IMR-90 (cell line): ENCODE measurements at regions of chr2 and their contacts with region 1.

Region 1: GRCh38 chr2:158539176-158540005 is 82.6 kb downstream of the PKP4 start:
- DNase-seq: peak; percentile 90
- ATAC-seq: peak; percentile 46
- H3K4me3 ChIP-seq: no peak overlapping the region
- H3K27ac ChIP-seq: no peak overlapping the region
- H3K4me1 ChIP-seq: no peaks in the 10 kb centered on the region; the same call in 1 of the 2 replicates
- H3K27me3 ChIP-seq: no peaks in the 10 kb centered on the region
- CTCF ChIP-seq: no peak
- POLR2A ChIP-seq: no peak
- RAD21 ChIP-seq: no peak

Region 2: GRCh38 chr2:158497486-158497885 is 41.9 kb before region 1 on chr2:
- CTCF ChIA-PET with region 1: no interaction called
- POLR2A ChIA-PET with region 1: no interaction called
- dilution Hi-C with region 1: no loop called
- in situ Hi-C with region 1: no loop called
- intact Hi-C with region 1: loop called (anchors 5 kb)
- DNase-seq: peak; percentile 50
- ATAC-seq: no peak
- H3K4me3 ChIP-seq: no peak overlapping the region
- H3K27ac ChIP-seq: no peak overlapping the region
- H3K4me1 ChIP-seq: peaks cover 21% of the 10 kb centered on the region
- H3K27me3 ChIP-seq: no peaks in the 10 kb centered on the region
- CTCF ChIP-seq: no peak
- POLR2A ChIP-seq: no peak
- RAD21 ChIP-seq: no peak

Region 3: DNA sequence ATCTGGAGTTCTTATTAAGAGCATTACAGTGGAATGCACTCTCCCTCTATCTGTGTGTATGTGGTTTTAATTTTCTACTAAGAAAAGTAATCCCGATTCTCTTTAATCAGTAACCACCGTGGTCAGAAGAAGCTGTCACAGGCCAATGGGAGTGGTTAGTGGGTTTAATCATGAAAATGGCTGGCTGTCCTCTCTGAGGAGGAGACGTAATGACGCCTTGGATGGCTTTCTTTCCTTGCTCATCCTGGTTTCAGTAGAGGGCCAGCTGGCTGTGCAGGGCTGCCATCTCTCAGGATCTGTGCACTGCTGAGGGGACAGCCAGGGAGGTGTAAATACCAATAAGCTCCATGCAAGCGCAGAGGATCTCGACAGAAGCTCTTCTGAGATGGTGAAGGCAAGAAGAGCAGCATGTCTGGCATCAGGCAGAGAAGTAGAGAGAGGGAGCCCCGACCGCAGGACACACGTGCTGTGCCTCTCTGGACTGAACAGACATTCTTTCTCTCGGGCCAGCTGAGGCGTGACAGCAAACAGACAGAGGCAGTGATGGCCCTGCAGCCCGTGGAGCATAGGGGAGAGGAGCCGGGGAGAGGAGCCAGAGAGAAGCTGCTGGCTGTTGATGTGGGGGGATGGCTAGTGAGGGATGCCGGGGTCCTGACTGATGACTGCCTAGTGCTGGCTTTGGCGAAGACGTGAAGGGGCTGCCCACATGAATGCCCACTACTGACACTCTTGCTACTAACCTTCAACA is 190.7 kb after region 1 on chr2:
- CTCF ChIA-PET with region 1: no interaction called
- POLR2A ChIA-PET with region 1: no interaction called
- dilution Hi-C with region 1: no loop called
- in situ Hi-C with region 1: no loop called
- intact Hi-C with region 1: loop called (anchors 10 kb)
- DNase-seq: no peak
- ATAC-seq: no peak
- H3K4me3 ChIP-seq: no peak overlapping the region
- H3K27ac ChIP-seq: no peak overlapping the region
- H3K4me1 ChIP-seq: no peaks in the 10 kb centered on the region
- H3K27me3 ChIP-seq: peaks cover 31% of the 10 kb centered on the region
- CTCF ChIP-seq: no peak
- POLR2A ChIP-seq: no peak
- RAD21 ChIP-seq: no peak

Region 4: GRCh38 chr2:158835431-158835830 is 296.0 kb after region 1 on chr2:
- CTCF ChIA-PET with region 1: no interaction called
- POLR2A ChIA-PET with region 1: interaction called, 11 read pairs
- dilution Hi-C with region 1: no loop called
- in situ Hi-C with region 1: no loop called
- intact Hi-C with region 1: no loop called
- DNase-seq: no peak
- ATAC-seq: peak; percentile 27; the same call in 1 of the 2 replicates
- H3K4me3 ChIP-seq: no peak overlapping the region
- H3K27ac ChIP-seq: no peak overlapping the region
- H3K4me1 ChIP-seq: no peaks in the 10 kb centered on the region
- H3K27me3 ChIP-seq: peaks cover 3% of the 10 kb centered on the region
- CTCF ChIP-seq: no peak
- POLR2A ChIP-seq: no peak
- RAD21 ChIP-seq: no peak